ENCODE measurements at regions of chr15 and their contacts with region 1.

Region 1: DNA sequence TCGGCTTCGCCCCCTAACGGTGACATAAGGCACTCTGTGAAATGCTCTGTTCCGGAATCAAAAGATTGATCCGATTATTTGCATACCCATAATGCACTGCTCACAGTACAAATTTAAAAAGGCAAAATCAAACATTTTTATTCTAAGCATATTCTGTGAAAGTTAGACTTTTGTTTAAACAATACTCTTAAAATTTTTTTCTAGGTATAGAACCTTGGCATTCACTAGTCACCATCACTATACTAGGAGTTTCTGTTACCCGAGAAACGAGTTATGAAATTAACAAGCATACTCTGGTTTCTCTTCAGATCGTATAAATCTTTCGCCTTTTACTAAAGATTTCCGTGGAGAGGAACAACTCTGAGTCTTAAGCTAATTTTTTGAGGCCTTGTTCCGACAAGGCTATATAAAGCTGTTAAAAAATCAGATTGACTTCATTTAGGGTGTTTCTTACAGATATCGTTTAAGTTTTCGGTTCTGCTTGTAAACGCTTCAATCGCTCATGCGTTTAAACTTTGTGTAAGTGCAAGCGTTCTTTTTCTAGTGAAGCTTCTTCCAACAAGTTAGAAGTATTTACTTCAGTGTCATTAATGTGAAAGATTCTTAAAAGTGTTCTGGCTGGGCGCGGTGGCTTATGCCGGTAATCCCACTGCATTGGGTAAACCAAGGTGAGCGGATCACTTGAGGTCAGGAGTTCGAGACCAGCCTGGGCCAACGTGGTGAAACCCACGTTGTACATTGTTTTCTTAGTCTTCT is at the start of gene RNU5B-1:
- DNase-seq: peak; percentile 97
- ATAC-seq: peak; percentile 82
- H3K4me3 ChIP-seq: peak within 1 kb of the TSS; percentile 49 to 51
- H3K27ac ChIP-seq: peak within 1 kb of the TSS; percentile 67
- H3K4me1 ChIP-seq: peaks cover 20 to 29% of the 10 kb centered on the region in 2 experiments
- H3K27me3 ChIP-seq: no peaks in the 10 kb centered on the region
- CTCF ChIP-seq: peak; percentile 68 to 90 (median 86); a peak in 4 of 6 replicates
- POLR2A ChIP-seq: peak; percentile 100
- RAD21 ChIP-seq: no peak; the same call in 1 of the 2 replicates
- total RNA-seq, gene RNU5B-1: not detected

Region 2: DNA sequence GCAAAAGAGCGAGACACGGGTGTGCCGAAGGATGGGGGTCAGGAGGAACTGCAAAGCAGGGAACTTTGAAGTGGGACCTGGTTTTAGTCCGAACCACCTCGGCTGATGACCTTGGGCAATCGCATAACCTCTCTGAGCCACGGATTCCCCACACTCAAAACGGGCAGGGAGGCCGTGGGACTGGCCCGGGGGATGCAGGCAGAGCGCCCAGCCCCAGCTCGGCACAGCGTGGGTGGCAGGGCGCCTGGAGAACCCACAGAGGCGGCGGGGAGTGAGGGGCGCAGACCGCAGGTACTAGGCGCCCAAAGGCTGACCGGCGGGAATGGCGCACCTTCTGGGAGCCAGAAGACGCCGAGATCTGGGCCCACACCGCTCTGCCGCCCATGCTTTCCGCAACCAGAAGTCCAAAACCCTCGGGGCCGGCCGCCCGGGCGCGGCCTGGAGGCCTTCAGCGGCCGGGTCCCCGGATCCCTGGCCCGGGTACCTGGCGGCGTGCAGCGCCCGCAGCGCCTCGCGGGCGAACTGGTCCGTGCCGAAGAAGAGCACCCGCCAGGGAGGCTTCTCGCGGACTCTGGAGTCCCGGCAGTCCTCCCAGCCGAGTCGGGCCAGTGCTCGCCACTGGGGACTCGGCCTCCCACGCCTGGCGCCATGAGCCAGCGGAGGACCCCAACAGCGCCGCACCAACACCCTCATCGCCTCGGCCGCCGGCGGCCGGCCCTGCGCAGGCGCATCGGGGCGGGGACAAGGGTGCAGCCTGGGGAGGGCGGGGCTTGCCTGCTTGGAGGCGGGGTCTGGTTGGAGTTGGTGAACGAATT is 275.4 kb before region 1 on chr15 and contains the start of gene MTFMT:
- CTCF ChIA-PET with region 1: no interaction called
- POLR2A ChIA-PET with region 1: interaction called, 9 read pairs
- RAD21 ChIA-PET with region 1: interaction called in 1 of 2 experiments, 3 read pairs
- intact Hi-C with region 1: loop called (anchors 1 kb)
- DNase-seq: peak; percentile 53
- ATAC-seq: peak; percentile 82
- H3K4me3 ChIP-seq: peak within 1 kb of the TSS; percentile 92 to 96
- H3K27ac ChIP-seq: peak within 1 kb of the TSS; percentile 72
- H3K4me1 ChIP-seq: peaks cover 7 to 30% of the 10 kb centered on the region in 2 experiments; a peak in 3 of 4 replicates
- H3K27me3 ChIP-seq: no peaks in the 10 kb centered on the region
- CTCF ChIP-seq: no peak
- POLR2A ChIP-seq: peak; percentile 92
- RAD21 ChIP-seq: no peak
- total RNA-seq, gene MTFMT: 30.4 TPM

Region 3: DNA sequence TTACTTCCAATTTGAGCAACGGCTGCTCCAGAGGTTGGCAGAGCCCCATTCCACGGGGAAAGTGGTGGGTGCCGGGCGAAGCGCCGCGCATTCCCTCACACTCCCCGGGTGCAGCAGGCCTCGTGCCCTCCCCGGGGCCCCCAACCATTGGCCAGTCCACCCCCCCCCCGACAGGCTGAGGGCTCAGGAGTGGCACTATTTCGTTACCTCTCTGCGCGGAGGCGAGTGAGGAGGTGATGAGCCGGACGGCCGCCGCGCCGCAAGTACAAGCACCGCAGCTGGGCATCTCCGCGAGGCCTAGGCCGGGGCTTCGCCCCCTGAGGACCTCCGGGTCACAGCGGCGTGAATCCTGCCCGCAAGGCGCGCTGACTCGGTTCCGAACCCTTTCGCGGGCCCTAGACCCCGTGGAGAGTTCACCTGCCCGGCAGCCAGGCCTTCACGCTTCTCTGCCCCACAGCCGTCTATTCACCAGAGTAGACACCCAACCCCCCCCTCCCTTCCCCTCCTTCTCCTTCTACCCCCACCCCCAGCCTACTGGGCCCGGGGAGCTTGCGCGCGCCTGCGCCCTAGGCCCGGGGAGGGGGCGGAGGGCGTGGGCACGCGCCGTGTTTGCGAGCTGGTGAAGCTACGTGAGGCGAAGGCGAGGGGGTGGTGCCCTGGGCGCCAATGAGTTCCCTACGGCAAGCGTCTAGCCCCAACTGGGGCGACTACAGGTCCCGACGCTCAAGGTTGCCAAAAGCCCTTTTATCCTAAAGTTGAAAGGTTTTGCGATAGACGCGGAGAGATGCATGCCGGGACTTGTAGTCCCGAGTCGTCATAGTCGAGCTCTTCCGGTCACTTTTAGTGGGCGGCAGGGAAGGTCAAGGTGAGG is 119.5 kb before region 1 on chr15 and contains the start of gene CLPX:
- CTCF ChIA-PET with region 1: interaction called, 14 read pairs
- POLR2A ChIA-PET with region 1: interaction called, 72 read pairs
- RAD21 ChIA-PET with region 1: interaction called in 1 of 2 experiments, 3 read pairs
- intact Hi-C with region 1: loop called (anchors 2 kb)
- DNase-seq: peak; percentile 92
- ATAC-seq: peak; percentile 88
- H3K4me3 ChIP-seq: peak within 1 kb of the TSS; percentile 88 to 94
- H3K27ac ChIP-seq: peak within 1 kb of the TSS; percentile 84
- H3K4me1 ChIP-seq: peaks cover 15 to 26% of the 10 kb centered on the region in 2 experiments
- H3K27me3 ChIP-seq: no peaks in the 10 kb centered on the region
- CTCF ChIP-seq: no peak
- POLR2A ChIP-seq: peak; percentile 24
- RAD21 ChIP-seq: no peak
- total RNA-seq, gene CLPX: 64.1 TPM

Region 4: DNA sequence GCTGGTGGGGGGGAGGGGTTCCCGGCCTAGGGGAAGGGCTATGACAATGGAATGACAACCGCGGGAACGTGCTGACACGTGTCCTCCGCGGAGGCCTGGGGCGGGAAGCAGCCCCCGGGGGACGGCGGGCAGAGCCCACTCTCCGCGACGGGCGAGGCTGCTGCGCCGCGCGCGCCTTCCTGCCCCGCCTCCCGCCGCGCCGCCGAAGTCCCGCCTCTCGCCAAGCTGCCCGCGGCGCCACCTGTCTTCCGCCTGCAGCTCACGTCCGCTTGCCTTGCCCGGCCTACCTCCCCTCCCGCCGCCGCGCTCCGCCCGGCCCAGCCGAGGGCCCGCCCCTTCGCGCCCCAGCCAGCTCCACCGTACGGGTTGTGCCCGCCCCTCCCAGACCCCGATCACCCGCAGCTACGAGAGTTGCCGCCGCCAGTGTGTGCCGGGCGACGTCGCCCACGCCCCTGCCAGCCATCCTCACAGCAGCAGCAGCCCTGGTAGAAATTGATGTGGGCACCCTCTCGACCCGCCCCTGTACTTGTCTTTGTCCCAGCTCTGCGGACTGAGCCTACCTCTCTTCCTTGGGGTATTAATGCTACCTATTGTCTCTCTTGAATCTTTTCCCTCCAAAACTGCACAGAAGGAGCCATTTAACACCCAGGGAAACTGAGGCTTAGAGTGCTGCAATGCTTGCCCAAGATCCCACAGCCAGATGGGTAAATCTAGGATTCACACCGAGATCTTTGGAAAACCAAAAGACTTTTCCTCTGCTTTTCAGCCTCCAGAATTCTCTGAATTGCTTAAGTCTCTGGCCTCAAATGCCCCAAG is 17.7 kb before region 1 on chr15 and contains the start of gene PARP16:
- CTCF ChIA-PET with region 1: no interaction called
- POLR2A ChIA-PET with region 1: interaction called, 46 read pairs
- RAD21 ChIA-PET with region 1: no interaction called
- intact Hi-C with region 1: no loop called
- DNase-seq: peak; percentile 73
- ATAC-seq: peak; percentile 96
- H3K4me3 ChIP-seq: peak within 1 kb of the TSS; percentile 64 to 87
- H3K27ac ChIP-seq: peak within 1 kb of the TSS; percentile 73
- H3K4me1 ChIP-seq: peaks cover 11 to 20% of the 10 kb centered on the region in 2 experiments
- H3K27me3 ChIP-seq: no peaks in the 10 kb centered on the region
- CTCF ChIP-seq: peak in 1 of 3 experiments; percentile 35; a peak in 3 of 6 replicates
- POLR2A ChIP-seq: peak; percentile 16
- RAD21 ChIP-seq: no peak
- total RNA-seq, gene PARP16: 9.7 TPM

Region 5: GRCh38 chr15:65318870-65319356 is 14.3 kb after region 1 on chr15:
- CTCF ChIA-PET with region 1: interaction called, 4 read pairs
- POLR2A ChIA-PET with region 1: interaction called, 27 read pairs
- RAD21 ChIA-PET with region 1: no interaction called
- intact Hi-C with region 1: no loop called
- DNase-seq: peak; percentile 66
- ATAC-seq: peak; percentile 99
- H3K4me3 ChIP-seq: no peak overlapping the region
- H3K27ac ChIP-seq: no peak overlapping the region
- H3K4me1 ChIP-seq: no peaks in the 10 kb centered on the region
- H3K27me3 ChIP-seq: no peaks in the 10 kb centered on the region
- CTCF ChIP-seq: peak; percentile 77 to 96 (median 92)
- POLR2A ChIP-seq: no peak
- RAD21 ChIP-seq: peak; percentile 98